A549 (cell line): ENCODE measurements at regions of chr14 and their contacts with region 1.

Region 1: GRCh38 chr14:77040059-77040740 is 11.7 kb upstream of the IRF2BPL start:
- DNase-seq: peak; percentile 88 to 99
- ATAC-seq: peak; percentile 86 to 88
- H3K4me3 ChIP-seq: peak overlapping the region; percentile 36
- H3K27ac ChIP-seq: peak overlapping the region; percentile 90 to 99
- H3K4me1 ChIP-seq: peaks cover 86% of the 10 kb centered on the region
- CTCF ChIP-seq: no peak
- EP300 ChIP-seq: peak; percentile 18 to 68; a peak in 2 of 5 replicates
- POLR2A ChIP-seq: no peak
- RAD21 ChIP-seq: peak; percentile 8 to 31; a peak in 2 of 5 replicates

Region 2: DNA sequence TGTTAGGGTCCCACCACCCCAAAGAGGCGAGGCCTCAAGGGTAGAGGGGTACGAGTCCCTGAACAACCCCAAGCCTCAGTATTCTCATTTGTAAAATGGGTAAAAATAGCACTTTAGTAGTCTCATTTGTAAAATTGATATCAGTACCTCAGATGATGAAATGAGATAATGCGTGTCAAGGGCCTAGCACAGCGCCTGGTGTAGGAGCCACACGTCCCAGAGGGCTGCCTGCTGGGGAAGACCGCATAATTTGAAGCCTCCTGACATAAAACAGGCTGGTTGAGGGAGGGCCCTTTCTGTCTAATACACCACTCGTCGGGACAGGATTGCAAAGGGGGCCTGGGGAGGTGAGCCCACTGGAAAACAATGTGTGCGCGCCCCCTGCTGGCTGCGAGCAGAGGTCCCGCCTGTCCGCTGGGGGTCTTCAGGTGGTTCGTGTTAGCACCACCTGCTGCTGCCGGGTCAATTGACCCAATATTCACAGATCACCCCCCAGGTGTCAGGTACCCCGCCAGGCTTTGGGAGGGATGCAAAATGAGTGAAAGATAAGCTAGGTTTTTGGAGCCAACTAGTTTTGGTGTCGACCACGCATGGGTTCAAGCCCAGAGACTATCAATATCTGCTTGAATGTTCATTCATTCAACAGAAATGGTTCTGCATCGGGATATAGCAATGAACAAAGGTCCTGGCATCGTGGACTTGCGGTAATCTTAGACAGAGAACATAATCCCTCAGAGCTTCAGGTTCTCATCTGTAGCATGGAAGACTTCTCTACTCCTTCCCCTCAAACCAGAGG is 13.0 kb after region 1 on chr14:
- CTCF ChIA-PET with region 1: interaction called, 481 read pairs
- POLR2A ChIA-PET with region 1: no interaction called
- DNase-seq: peak in 1 of 2 experiments; percentile 65
- ATAC-seq: peak; percentile 28 to 88; a peak in 3 of 6 replicates
- H3K4me3 ChIP-seq: no peak overlapping the region
- H3K27ac ChIP-seq: peak overlapping the region; percentile 66 to 81
- H3K4me1 ChIP-seq: peaks cover 19% of the 10 kb centered on the region
- CTCF ChIP-seq: peak; percentile 67
- EP300 ChIP-seq: no peak
- POLR2A ChIP-seq: no peak
- RAD21 ChIP-seq: peak; percentile 83 to 86

Region 3: GRCh38 chr14:77059276-77059915 is 19.2 kb after region 1 on chr14:
- CTCF ChIA-PET with region 1: interaction called, 481 read pairs
- POLR2A ChIA-PET with region 1: interaction called, 5 read pairs
- DNase-seq: peak; percentile 51 to 66
- ATAC-seq: peak; percentile 87 to 93
- H3K4me3 ChIP-seq: no peak overlapping the region
- H3K27ac ChIP-seq: peak overlapping the region; percentile 31 to 77; a peak in 4 of 6 replicates
- H3K4me1 ChIP-seq: peaks cover 11% of the 10 kb centered on the region; the same call in 2 of the 3 replicates
- CTCF ChIP-seq: no peak
- EP300 ChIP-seq: no peak
- POLR2A ChIP-seq: no peak
- RAD21 ChIP-seq: peak; percentile 35 to 54; a peak in 3 of 5 replicates